HEK293 (cell line): ENCODE measurements at regions of chr18 and their contacts with region 1.

Region 1: GRCh38 chr18:12327510-12328178 is 19.6 kb downstream of the TUBB6 start:
- H3K4me3 ChIP-seq: no peak overlapping the region
- H3K27ac ChIP-seq: no peak overlapping the region
- H3K4me1 ChIP-seq: no peaks in the 10 kb centered on the region; the same call in 1 of the 2 replicates
- CTCF ChIP-seq: peak; percentile 82

Region 2: DNA sequence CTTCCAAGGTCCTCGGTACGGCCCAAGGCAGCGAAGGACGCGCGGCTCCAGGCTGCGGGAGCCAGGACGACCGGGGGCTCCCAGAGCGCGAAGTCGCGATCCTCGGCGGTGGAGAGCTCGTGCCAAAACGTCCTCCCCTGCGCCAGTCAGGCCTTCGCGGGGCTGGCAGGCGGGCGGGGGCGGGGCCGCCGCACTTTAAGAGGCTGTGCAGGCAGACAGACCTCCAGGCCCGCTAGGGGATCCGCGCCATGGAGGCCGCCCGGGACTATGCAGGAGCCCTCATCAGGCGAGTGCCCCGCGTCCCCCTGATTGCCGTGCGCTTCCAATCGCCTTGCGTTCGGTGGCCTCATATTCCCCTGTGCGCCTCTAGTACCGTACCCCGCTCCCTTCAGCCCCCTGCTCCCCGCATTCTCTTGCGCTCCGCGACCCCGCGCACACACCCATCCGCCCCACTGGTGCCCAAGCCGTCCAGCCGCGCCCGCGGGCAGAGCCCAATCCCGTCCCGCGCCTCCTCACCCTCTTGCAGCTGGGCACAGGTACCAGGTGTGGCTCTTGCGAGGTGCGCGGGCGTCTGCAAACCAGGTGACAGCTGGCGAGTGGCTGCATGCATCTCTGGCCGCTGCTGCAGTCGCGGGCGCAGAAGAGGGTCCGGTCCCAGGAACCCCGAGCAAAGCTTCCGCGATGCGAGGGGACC is 73.4 kb before region 1 on chr18 and contains the start of gene CIDEA:
- CTCF ChIA-PET with region 1: no interaction called
- POLR2A ChIA-PET with region 1: no interaction called
- H3K4me3 ChIP-seq: no peak within 1 kb of the TSS
- H3K27ac ChIP-seq: no peak within 1 kb of the TSS
- H3K4me1 ChIP-seq: no peaks in the 10 kb centered on the region
- CTCF ChIP-seq: no peak

Region 3: DNA sequence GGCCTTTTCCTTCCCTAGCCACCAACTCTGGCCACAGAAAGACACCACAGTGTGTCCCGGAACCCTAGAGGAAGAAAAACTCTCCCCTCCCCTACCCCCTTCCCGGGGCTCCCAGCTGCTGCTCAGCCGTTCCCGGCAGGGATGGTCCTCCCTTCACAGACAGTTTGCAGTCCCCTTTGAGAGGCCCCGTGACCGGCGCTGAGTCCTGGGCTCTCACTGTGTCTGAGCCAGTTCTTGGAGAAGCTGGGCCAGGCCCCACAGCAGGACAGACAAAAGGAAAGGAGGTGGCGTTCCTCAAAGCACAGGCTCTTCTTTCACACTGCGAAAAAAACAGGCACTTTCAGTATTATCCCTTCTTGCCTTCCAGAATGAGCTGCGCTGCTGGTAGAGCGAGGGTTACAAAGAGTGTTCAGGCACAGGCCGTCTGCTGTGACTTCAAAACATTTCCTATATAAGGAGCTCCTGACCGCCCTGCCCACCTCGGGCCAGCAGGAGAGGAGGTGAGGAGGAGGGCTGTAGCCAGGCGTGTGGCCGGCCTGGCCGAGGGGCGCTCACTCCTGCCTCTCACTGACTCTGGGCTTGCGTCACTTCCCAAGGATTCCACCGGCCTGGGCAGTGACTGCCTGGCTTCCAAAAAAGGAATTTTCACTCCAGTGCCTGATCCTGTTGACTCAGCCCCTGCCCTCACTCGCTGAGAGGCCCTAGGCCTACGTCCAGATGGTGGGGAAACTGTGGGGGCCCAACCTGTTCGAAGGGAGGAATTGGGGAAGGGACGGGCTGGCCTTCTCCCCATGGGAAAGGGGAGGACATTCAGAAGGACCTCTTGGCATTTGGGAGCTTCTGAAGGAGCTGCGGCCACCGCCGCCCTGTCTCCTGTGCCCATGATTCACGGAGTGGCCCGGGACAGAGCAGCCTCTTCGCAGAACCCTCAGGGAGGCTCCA is 48.6 kb before region 1 on chr18:
- CTCF ChIA-PET with region 1: interaction called, 15 read pairs
- POLR2A ChIA-PET with region 1: no interaction called
- H3K4me3 ChIP-seq: no peak overlapping the region
- H3K27ac ChIP-seq: no peak overlapping the region
- H3K4me1 ChIP-seq: no peaks in the 10 kb centered on the region
- CTCF ChIP-seq: no peak

Region 4: DNA sequence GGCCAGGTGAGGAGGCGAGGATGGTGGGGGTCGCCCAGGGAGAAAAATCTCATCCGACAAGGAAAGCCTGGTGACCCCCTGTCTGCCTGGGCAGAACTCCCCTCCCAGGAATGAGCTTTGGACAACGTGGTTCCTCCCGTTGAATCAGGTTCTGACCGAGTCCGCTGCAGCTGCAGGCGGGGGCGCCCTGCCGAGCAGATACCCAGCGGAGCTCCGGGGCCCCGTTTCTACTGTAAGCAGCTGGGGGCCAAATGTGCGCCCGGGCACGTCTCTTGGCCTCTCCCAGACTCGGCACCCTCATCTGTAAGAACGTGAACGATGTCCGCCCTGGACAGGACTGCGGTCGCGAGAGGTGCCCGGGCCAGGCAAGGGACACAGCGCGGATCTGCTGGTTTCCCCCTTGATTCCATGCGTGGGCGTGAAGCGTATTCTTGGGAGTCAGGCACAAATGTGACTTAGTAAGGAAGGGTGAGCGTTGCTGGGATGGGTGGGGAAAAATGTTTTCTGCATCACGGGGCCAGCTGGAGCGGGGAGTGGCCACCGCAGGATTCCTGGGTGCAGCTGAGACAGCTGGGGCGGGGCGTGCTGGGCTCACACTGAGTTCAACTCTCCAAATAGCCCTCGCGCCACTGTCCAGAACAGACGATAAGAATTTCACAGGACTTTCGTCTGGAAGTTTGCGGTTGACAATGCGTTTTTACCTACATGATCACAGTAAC is 39.8 kb before region 1 on chr18:
- CTCF ChIA-PET with region 1: interaction called, 10 read pairs
- POLR2A ChIA-PET with region 1: no interaction called
- H3K4me3 ChIP-seq: peak overlapping the region; percentile 33
- H3K27ac ChIP-seq: no peak overlapping the region
- H3K4me1 ChIP-seq: no peaks in the 10 kb centered on the region
- CTCF ChIP-seq: no peak; the same call in 1 of the 2 replicates

Region 5: DNA sequence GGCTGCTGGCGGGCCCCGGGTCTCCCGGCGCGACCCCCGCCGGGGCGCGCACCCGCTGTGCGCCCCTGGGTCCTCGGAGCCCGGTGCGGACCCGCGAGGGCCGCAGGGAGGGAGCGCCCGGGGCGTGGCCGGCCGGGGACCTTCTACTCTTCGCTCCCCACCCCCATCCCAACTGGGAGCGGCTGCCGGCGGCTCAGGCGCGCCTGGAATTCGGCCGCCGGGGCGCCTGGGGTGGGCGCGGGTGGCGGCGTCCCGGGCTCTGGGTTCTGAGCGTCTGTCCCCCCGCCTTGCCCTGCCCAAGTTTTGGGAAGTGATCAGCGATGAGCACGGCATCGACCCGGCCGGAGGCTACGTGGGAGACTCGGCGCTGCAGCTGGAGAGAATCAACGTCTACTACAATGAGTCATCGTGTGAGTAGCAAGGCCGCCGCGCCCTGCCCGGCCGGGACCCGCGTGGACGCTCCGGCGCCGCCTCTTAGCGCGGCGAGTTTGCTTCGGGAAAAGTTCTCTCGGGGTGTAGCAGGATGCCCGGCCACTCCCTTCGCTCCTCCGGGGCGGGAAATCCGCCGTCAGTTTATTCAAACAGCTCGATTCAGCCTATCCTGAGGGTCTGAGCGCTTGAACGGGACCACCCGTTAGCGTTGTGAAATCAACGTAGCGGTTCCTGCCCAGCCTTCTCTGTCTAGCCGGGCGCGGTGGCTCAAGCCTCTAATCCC is 19.1 kb before region 1 on chr18:
- CTCF ChIA-PET with region 1: interaction called, 101 read pairs
- POLR2A ChIA-PET with region 1: interaction called, 4 read pairs
- H3K4me3 ChIP-seq: peak overlapping the region; percentile 70
- H3K27ac ChIP-seq: peak overlapping the region; percentile 80; the same call in 1 of the 2 replicates
- H3K4me1 ChIP-seq: no peaks in the 10 kb centered on the region
- CTCF ChIP-seq: no peak

Region 6: GRCh38 chr18:12347895-12348294 is 20.3 kb after region 1 on chr18:
- CTCF ChIA-PET with region 1: interaction called, 16 read pairs
- POLR2A ChIA-PET with region 1: no interaction called
- H3K4me3 ChIP-seq: no peak overlapping the region
- H3K27ac ChIP-seq: no peak overlapping the region
- H3K4me1 ChIP-seq: no peaks in the 10 kb centered on the region
- CTCF ChIP-seq: no peak

Region 7: DNA sequence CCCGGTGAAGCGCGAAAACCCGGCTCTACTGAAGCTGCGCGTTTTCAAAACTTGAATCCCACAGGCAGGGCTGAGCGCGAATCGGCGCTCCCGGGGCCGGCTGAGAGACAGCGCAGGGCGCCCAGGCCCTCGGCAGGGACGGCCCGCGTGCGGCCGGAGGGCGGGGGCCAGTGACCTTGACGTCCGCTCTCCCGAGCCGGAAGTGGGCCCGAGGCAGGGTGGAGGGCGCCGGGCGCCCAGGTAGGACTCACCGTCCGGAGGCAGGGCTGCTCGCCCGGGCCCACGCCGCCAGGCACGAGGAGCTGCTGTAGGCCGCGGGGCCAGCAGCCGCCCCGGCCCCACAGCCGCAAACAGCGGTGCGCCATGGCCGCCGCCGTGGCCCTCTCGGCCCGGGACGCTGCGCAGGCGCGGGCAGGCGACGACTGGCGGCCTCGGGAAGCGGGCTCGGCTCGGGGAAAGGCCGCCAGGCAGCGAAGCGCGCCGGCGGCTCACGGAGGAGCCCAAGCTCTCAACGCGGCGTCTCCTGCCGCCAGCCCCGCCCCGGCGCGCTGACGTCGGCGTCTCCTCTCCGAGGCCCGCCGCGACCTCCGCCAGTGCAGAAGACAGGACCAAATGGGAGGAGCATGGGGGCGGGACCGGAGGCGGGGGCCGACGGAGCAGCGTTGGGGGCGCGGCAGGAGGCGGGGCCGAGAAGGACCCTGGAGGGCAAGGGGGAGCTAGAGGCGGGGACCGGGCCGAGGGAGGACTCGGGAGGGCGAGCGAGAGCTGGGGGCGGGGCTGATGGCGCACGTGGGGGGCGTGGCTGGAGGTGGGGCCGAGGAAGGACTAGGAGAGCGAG is 49.3 kb after region 1 on chr18 and contains the start of gene AFG3L2:
- CTCF ChIA-PET with region 1: interaction called, 9 read pairs
- POLR2A ChIA-PET with region 1: interaction called, 14 read pairs
- H3K4me3 ChIP-seq: peak within 1 kb of the TSS; percentile 68
- H3K27ac ChIP-seq: peak within 1 kb of the TSS; percentile 99
- H3K4me1 ChIP-seq: peaks cover 16% of the 10 kb centered on the region
- CTCF ChIP-seq: no peak

Region 8: GRCh38 chr18:12574494-12575185 is 247.0 kb after region 1 on chr18:
- CTCF ChIA-PET with region 1: no interaction called
- POLR2A ChIA-PET with region 1: no interaction called
- H3K4me3 ChIP-seq: no peak overlapping the region
- H3K27ac ChIP-seq: no peak overlapping the region
- H3K4me1 ChIP-seq: peaks cover 11% of the 10 kb centered on the region
- CTCF ChIP-seq: no peak

Region 9: DNA sequence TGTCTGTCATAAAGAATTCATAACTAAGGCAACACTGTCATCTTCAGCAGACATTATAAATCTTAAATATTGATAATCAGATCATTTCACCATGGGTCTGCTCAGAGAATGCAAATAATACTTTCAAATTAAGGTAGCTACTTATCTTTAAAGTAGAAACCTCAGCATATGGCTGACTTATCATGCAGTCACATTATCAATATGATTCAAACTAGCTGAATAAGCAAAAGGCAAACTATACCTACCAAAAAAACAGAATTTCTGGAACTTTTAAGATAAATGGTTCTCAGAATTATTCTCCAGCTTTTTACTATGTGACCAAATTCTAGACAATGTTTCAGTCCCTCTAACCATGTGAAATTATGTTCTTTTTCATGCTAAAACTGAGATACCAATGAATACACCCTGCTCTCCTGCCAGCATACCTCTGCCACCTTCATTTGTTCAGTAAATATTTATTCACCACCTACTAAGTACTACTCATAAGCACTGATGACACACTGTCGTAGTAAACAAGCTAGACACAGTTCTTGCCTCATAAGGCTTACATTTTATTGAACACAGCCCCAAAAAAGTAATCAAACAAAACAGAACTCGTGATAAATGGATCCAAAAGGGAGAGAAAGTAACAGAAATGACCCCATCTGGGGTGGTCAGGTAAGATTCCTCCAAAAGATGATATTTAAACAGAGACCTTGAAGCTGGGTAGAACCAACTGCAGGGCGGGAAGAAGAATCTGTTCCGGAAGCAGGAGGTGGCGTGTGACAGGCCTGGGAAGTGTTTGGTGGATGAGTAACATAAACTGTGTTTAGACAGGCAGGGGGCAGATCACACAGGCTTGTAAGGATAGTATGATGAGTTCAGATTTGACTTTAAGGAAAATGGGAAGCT is 312.6 kb after region 1 on chr18:
- CTCF ChIA-PET with region 1: no interaction called
- POLR2A ChIA-PET with region 1: no interaction called
- H3K4me3 ChIP-seq: no peak overlapping the region
- H3K27ac ChIP-seq: 0 out of 2 replicates have a peak overlapping the region, but pooled peaks have one; percentile 24
- H3K4me1 ChIP-seq: peaks cover 14% of the 10 kb centered on the region
- CTCF ChIP-seq: no peak; the same call in 1 of the 2 replicates

Region 10: DNA sequence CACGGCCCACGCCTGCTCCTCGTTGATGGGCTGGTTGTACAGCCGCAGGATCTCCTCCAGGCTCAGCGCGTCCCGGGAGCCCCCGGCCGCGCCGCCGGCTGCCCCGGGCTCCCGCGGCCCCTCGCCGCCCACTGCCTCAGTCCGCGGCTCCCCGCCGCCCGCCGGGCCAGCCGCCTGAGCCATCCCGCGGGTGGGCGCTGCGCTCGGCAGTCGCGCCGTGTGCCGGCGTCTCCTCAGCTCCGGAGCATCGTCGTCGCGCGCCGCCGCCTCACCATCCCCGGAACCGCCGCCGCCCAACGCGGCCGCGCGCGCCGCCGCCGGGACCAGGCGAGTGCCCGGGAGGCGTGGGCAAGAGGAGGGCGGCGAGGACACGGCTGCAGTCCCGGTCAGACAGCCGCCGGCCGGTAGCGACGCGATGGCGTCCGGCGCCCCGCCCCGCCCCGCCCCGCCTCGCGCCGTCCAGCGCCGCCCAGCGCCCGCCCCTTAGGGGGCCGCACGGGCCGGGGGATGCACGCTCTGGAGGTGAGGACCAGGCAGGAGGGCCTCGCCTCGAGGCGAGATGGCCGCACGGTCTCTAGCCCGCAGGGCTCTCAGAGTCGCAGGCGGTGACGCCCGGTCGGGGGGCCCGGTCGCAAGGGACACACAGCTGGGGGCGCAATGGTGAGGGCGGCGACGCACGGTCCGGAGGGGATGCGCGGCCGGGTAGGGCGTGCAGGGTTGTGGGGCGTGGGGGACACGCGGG is 330.2 kb after region 1 on chr18 and contains the start of gene SPIRE1:
- CTCF ChIA-PET with region 1: interaction called, 12 read pairs
- POLR2A ChIA-PET with region 1: no interaction called
- H3K4me3 ChIP-seq: peak within 1 kb of the TSS; percentile 76
- H3K27ac ChIP-seq: peak within 1 kb of the TSS; percentile 91
- H3K4me1 ChIP-seq: peaks cover 5% of the 10 kb centered on the region
- CTCF ChIP-seq: peak; percentile 59